Gastrocnemius medialis (tissue), 4 donors: ENCODE measurements at regions of chr9 and their contacts with region 1.

Region 1: DNA sequence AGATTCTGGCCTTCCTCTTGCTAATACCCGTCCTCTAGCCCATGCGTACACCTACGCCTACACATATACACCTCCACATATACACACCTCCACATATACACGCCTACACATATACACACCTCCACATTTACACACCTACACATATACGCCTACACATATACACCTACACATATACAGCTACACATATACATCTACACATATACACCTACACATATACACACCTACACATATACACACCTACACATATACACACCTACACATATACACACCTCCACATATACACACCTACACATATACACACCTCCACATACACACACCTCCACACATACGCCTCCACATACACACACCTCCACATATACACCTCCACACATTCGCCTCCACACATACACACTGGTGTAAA is 27.2 kb downstream of the AK3 start:
- DNase-seq: no peak
- ATAC-seq: no peak
- H3K4me3 ChIP-seq: no peak overlapping the region
- H3K27ac ChIP-seq: no peak overlapping the region
- H3K4me1 ChIP-seq: peaks cover 14 to 17% of the 10 kb centered on the region in 2 donors
- H3K27me3 ChIP-seq: no peaks in the 10 kb centered on the region
- CTCF ChIP-seq: no peak
- POLR2A ChIP-seq: no peak

Region 2: GRCh38 chr9:4814913-4815312 is 101.1 kb after region 1 on chr9:
- in situ Hi-C with region 1: loop called in 1 of 4 experiments (anchors 25 kb)
- intact Hi-C with region 1: no loop called
- DNase-seq: no peak
- ATAC-seq: no peak
- H3K4me3 ChIP-seq: no peak overlapping the region
- H3K27ac ChIP-seq: peak overlapping the region; percentile 2 to 96 (median 31)
- H3K4me1 ChIP-seq: peaks cover 18 to 55% of the 10 kb centered on the region in 2 donors
- H3K27me3 ChIP-seq: no peaks in the 10 kb centered on the region
- CTCF ChIP-seq: no peak
- POLR2A ChIP-seq: no peak